Natural killer cell (primary cell): ENCODE measurements at regions of chr9 and their contacts with region 1.

Region 1: GRCh38 chr9:96327694-96328352 is 25.8 kb upstream of the HSD17B3 start:
- DNase-seq: peak in 1 of 2 donors; percentile 77
- ATAC-seq: peak; percentile 76 to 87 (median 80)
- H3K4me3 ChIP-seq: no peak overlapping the region
- H3K4me3 Mint-ChIP-seq: no peak overlapping the region
- H3K27ac ChIP-seq: no peak overlapping the region
- H3K27ac Mint-ChIP-seq: no peak overlapping the region
- H3K4me1 ChIP-seq: no peaks in the 10 kb centered on the region
- H3K4me1 Mint-ChIP-seq: no peaks in the 10 kb centered on the region
- H3K27me3 ChIP-seq: no peaks in the 10 kb centered on the region
- H3K27me3 Mint-ChIP-seq: no peaks in the 10 kb centered on the region
- CTCF ChIP-seq: peak; percentile 86

Region 2: GRCh38 chr9:96222132-96222531 is 105.7 kb before region 1 on chr9:
- intact Hi-C with region 1: no loop called
- DNase-seq: no peak
- ATAC-seq: no peak
- H3K4me3 ChIP-seq: no peak overlapping the region
- H3K4me3 Mint-ChIP-seq: no peak overlapping the region
- H3K27ac ChIP-seq: no peak overlapping the region
- H3K27ac Mint-ChIP-seq: no peak overlapping the region
- H3K4me1 ChIP-seq: peaks cover 25% of the 10 kb centered on the region
- H3K4me1 Mint-ChIP-seq: peaks cover 4 to 16% of the 10 kb centered on the region in 2 donors
- H3K27me3 ChIP-seq: peaks cover 21% of the 10 kb centered on the region
- H3K27me3 Mint-ChIP-seq: peaks cover 30 to 49% of the 10 kb centered on the region in 2 donors
- CTCF ChIP-seq: peak; percentile 15

Region 3: GRCh38 chr9:96418074-96418809 is 90.4 kb after region 1 on chr9 and contains the start of gene ZNF367:
- intact Hi-C with region 1: no loop called
- DNase-seq: peak; percentile 88 to 91
- ATAC-seq: peak; percentile 72 to 88 (median 80)
- H3K4me3 ChIP-seq: peak within 1 kb of the TSS; percentile 86
- H3K4me3 Mint-ChIP-seq: peak within 1 kb of the TSS; percentile 90
- H3K27ac ChIP-seq: peak within 1 kb of the TSS; percentile 91
- H3K27ac Mint-ChIP-seq: peak within 1 kb of the TSS; percentile 92 to 97
- H3K4me1 ChIP-seq: peaks cover 35% of the 10 kb centered on the region
- H3K4me1 Mint-ChIP-seq: peaks cover 28 to 33% of the 10 kb centered on the region in 2 donors
- H3K27me3 ChIP-seq: no peaks in the 10 kb centered on the region
- H3K27me3 Mint-ChIP-seq: no peaks in the 10 kb centered on the region
- CTCF ChIP-seq: no peak
- total RNA-seq, gene ZNF367: 4.4 to 6.2 (median 4.5) TPM

Region 4: GRCh38 chr9:96566498-96567207 is 238.8 kb after region 1 on chr9:
- intact Hi-C with region 1: loop called (anchors 1 kb)
- DNase-seq: peak; percentile 72 to 90
- ATAC-seq: peak; percentile 95
- H3K4me3 ChIP-seq: peak overlapping the region; percentile 74
- H3K4me3 Mint-ChIP-seq: peak overlapping the region; percentile 88
- H3K27ac ChIP-seq: peak overlapping the region; percentile 89
- H3K27ac Mint-ChIP-seq: peak overlapping the region; percentile 59 to 87
- H3K4me1 ChIP-seq: peaks cover 13% of the 10 kb centered on the region
- H3K4me1 Mint-ChIP-seq: peaks cover 8 to 17% of the 10 kb centered on the region in 2 donors
- H3K27me3 ChIP-seq: no peaks in the 10 kb centered on the region
- H3K27me3 Mint-ChIP-seq: peaks cover 3 to 15% of the 10 kb centered on the region in 2 donors
- CTCF ChIP-seq: peak; percentile 68

Region 5: DNA sequence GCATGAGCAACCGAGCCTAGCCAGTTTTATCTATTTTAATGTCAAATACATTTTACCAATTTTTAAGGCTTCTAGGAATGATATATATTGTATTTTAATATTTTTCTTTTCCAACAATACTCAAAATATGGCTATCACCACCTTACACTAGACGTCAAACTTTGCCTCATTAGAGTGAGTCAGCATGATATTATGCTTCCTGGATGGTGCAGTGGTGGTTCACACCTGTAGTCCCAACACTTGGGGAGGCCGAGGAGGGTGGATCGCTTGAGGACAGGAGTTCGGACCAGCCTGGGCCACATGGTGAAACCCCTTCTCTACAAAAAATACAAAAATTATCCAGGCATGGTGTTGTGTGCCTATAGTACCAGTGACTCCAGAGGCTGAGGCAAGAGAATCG is 299.1 kb after region 1 on chr9:
- intact Hi-C with region 1: no loop called
- DNase-seq: no peak
- ATAC-seq: no peak
- H3K4me3 ChIP-seq: no peak overlapping the region
- H3K4me3 Mint-ChIP-seq: no peak overlapping the region
- H3K27ac ChIP-seq: no peak overlapping the region
- H3K27ac Mint-ChIP-seq: no peak overlapping the region
- H3K4me1 ChIP-seq: no peaks in the 10 kb centered on the region
- H3K4me1 Mint-ChIP-seq: no peaks in the 10 kb centered on the region
- H3K27me3 ChIP-seq: no peaks in the 10 kb centered on the region
- H3K27me3 Mint-ChIP-seq: peaks cover 9 to 11% of the 10 kb centered on the region in 2 donors
- CTCF ChIP-seq: no peak

Region 6: DNA sequence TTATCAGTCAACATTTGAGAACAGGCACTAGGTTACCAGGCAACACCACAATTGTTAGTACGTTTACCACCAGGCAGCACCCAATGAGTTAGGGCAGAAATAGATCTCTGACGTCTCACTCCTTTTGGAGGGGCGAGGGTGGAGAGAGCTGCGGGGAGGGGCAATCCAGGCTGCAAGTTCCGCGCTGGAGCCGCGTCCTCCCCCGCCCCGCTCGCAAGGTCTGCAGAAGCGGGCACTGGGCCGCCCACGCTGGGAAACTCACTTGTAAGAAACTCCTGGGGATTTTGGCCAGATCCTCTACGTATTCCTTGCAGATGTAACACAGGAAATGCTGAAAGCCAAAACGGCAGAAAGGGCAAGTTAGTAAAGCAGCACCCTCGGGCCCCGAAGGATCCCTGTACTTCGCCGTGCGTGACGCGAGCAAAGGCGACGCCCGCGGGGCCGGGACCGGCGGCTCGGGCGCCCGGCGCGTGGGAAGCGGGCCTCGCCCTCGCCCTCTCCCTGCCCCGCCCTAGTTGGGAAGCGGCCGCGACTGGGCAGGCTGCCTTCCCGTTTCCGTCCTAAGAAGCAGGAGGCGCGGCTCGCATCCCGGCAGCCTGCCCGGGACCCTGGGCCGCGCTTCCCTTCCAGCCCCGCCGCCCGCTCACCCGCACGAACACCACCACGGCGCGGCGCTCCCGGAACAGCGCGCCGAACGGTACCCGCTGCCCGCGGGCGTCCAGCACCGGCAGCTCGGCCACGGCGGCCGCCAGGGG is 326.8 kb after region 1 on chr9:
- intact Hi-C with region 1: loop called (anchors 5 kb)
- DNase-seq: peak; percentile 78 to 93
- ATAC-seq: peak; percentile 82 to 89 (median 83)
- H3K4me3 ChIP-seq: peak overlapping the region; percentile 35
- H3K4me3 Mint-ChIP-seq: peak overlapping the region; percentile 93
- H3K27ac ChIP-seq: peak overlapping the region; percentile 68
- H3K27ac Mint-ChIP-seq: peak overlapping the region; percentile 92 to 96
- H3K4me1 ChIP-seq: peaks cover 11% of the 10 kb centered on the region
- H3K4me1 Mint-ChIP-seq: peaks cover 17 to 20% of the 10 kb centered on the region in 2 donors
- H3K27me3 ChIP-seq: no peaks in the 10 kb centered on the region
- H3K27me3 Mint-ChIP-seq: peaks cover 5 to 6% of the 10 kb centered on the region in 2 donors
- CTCF ChIP-seq: no peak

Region 7: DNA sequence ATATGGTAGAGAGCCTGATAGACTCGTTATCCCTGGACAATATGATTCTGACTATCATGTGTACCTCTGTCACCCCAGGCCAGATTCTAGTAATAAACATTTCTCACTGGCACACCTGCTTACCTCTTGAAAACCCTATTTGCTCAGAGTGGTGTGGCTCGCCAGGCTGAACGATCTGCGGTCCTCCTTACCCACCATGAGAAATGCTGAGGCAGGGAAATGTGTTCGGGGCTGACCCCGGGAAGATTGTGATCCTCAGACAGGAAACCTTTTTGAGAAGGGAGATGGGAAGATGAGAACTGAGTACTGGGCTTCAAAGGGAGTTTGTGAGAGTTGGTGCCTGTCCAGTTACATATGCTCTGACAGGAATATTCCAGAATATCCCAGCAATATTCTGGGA is 338.0 kb after region 1 on chr9:
- intact Hi-C with region 1: loop called (anchors 1 kb)
- DNase-seq: no peak
- ATAC-seq: no peak
- H3K4me3 ChIP-seq: no peak overlapping the region
- H3K4me3 Mint-ChIP-seq: no peak overlapping the region
- H3K27ac ChIP-seq: no peak overlapping the region
- H3K27ac Mint-ChIP-seq: peak overlapping the region in 1 of 2 donors; percentile 40
- H3K4me1 ChIP-seq: no peaks in the 10 kb centered on the region
- H3K4me1 Mint-ChIP-seq: no peaks in the 10 kb centered on the region
- H3K27me3 ChIP-seq: no peaks in the 10 kb centered on the region
- H3K27me3 Mint-ChIP-seq: peaks cover 0 to 3% of the 10 kb centered on the region in 2 donors
- CTCF ChIP-seq: no peak